A673 (cell line): ENCODE measurements at regions of chr19 and their contacts with region 1.

Region 1: DNA sequence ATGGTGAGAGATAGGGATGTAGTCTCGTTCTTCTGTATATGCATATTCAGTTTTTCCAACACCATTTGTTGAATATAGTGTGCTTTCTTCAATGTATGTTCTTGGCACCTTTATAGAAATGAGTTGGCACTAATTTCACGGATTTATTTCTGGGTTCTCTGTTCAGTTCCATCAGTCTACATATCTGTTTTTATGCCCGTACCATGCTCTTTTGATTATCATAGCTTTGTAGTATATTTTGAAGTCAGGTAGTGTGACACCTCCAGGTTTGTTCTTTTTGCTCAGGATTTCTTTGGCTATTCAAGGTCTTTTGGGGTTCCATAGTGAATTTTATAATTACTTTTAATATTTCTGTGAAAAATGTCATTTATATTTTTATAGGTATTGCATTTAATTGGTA is 14.5 kb upstream of the ZNF793 start:
- DNase-seq: no peak
- H3K4me3 ChIP-seq: no peak overlapping the region
- H3K27ac ChIP-seq: no peak overlapping the region
- H3K4me1 ChIP-seq: no peaks in the 10 kb centered on the region
- H3K27me3 ChIP-seq: no peaks in the 10 kb centered on the region
- CTCF ChIP-seq: no peak

Region 2: DNA sequence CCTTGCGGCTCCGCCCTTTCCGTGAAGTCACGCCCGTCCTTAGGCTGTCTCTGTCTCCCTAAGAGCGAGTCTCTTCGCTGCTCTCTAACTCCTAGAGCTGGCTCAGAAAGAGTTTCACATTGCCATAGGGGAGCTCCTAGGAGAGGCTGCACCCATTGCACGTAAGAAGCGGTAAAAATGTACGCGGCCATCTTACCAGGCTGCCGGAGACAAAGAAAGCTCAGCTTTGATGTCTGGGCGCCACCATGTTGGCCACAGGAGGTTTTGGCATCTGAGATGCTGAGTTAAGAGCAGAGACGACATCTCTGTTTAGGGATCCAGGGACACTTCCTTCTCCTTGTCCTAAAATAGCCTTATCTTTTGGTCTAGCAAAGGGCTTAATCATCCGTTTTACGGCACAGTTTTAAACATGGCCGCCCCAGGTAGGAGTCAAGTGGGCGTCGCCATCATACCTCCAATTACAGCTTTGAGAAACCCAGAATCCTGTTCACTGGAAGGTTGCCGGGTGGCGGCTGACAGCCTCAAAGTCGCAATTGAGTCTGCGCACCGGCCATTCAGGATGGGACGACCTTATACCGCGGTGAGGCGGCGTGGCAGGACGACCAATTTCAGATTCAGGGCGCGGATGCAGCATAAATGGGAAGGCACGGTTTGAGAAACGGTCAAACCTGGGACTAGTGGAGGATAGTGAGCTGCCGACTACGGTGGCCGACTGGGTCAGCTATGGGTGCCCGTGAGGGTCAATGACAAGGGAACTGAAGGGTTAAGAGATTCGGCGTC is 14.4 kb after region 1 on chr19 and contains the start of gene ZNF793:
- CTCF ChIA-PET with region 1: interaction called, 10 read pairs
- POLR2A ChIA-PET with region 1: interaction called, 3 read pairs
- intact Hi-C with region 1: no loop called
- DNase-seq: peak; percentile 15
- H3K4me3 ChIP-seq: peak within 1 kb of the TSS; percentile 34
- H3K27ac ChIP-seq: no peak within 1 kb of the TSS
- H3K4me1 ChIP-seq: no peaks in the 10 kb centered on the region
- H3K27me3 ChIP-seq: no peaks in the 10 kb centered on the region
- CTCF ChIP-seq: no peak
- total RNA-seq, gene ZNF793: 0.83 and 1.2 TPM in 2 replicates

Region 3: DNA sequence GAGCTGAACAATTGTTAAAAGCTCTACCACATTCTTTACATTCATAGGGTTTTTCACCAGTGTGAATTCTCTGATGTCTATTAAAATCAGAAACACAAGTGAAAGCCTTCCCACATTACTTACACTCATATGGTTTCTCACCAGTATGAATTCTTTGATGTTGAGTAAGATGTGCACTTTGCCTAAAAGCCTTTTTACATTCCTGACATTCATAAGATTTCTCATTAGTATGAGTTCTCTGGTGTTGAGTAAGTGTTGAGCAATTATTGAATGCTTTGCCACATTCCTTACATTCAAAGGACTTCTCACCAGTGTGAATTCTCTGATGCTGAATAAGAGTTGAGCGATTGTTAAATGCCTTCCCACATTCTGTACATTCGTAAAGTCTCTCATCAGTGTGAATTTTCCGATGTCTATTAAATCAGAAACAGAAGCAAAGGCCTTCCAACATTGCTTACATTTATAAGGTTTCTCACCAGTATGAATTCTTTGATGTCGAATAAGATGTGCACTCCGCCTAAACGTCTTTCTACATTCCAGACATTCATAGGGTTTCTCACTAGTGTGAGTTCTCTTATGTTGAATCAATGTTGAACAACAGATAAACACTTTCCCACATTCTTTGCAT is 177.2 kb after region 1 on chr19:
- CTCF ChIA-PET with region 1: no interaction called
- POLR2A ChIA-PET with region 1: no interaction called
- intact Hi-C with region 1: no loop called
- DNase-seq: no peak
- H3K4me3 ChIP-seq: no peak overlapping the region
- H3K27ac ChIP-seq: no peak overlapping the region
- H3K4me1 ChIP-seq: no peaks in the 10 kb centered on the region
- H3K27me3 ChIP-seq: no peaks in the 10 kb centered on the region
- CTCF ChIP-seq: no peak